RWPE1 (cell line): ENCODE measurements at regions of chr22 and their contacts with region 1.

Region 1: DNA sequence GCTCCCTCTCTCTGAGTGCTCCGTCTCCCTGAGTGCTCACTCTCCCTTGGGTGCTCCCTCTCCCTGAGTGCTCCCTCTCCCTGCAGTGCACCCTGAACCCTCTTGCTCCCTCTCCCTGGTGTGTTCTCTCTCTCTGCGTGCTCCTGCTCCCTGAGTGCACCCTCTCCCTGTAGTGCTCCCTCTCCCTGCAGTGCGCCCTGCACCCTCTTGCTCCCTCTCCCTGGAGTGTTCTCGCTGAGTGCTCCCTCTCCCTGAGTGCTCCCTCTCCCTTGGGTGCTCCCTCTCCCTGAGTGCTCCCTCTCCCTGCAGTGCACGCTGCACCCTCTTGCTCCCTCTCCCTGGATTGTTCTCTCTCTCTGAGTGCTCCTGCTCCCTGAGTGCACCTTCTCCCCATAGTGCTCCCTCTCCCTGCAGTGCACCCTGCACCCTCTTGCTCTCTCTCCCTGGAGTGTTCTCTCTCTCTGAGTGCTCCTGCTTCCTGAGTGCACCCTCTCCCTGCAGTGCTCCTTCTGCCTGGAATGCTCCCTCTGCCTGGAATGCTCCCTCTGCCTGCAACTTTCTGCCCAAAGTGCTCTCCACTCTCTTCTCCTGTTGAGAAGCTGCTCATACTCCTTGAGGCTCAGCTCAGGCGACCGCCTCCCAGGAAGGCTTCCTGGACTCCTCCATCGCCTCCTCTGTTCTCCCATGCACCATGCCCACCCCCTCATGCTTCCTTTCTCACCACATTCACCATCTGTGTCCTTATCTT is 48.4 kb upstream of the WNT7B start:
- DNase-seq: no peak
- H3K27ac ChIP-seq: 0 out of 2 replicates have a peak overlapping the region, but pooled peaks have one; percentile 5
- CTCF ChIP-seq: no peak

Region 2: DNA sequence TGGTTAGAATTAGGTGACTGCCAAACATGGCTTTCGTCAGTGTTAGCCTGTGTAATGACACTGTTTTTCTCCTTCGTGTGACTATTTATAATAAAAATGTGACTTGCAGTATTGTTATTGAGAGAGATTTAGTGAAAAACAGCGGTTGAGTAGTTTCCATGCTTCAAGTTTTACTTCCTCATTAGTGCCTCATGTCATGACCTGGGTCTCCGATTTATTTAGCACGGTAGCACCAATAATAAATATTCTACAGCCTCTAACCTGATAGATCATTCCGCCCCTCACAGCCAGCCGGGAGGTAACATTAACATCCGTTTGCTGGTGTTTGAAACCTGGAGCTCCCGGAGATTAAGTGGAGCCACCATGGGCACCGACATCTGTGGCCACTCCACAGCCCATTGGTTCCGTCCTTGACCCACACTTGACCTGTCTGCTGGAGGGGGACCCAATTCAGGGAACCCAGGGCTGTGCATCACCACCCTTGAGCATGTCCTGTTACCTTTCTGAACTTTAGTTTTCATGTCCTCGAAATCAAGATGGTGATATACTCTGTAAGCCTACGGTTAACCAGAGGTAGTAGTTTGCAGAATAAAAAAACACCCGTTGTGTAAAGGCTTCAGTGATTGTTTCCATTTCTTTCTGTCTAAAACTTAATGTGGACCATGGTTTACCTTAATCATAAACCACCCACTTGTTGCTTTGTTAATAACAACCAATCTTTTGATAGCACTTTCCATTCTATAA is 249.7 kb before region 1 on chr22:
- CTCF ChIA-PET with region 1: no interaction called
- POLR2A ChIA-PET with region 1: no interaction called
- DNase-seq: no peak
- H3K27ac ChIP-seq: no peak overlapping the region
- CTCF ChIP-seq: no peak

Region 3: DNA sequence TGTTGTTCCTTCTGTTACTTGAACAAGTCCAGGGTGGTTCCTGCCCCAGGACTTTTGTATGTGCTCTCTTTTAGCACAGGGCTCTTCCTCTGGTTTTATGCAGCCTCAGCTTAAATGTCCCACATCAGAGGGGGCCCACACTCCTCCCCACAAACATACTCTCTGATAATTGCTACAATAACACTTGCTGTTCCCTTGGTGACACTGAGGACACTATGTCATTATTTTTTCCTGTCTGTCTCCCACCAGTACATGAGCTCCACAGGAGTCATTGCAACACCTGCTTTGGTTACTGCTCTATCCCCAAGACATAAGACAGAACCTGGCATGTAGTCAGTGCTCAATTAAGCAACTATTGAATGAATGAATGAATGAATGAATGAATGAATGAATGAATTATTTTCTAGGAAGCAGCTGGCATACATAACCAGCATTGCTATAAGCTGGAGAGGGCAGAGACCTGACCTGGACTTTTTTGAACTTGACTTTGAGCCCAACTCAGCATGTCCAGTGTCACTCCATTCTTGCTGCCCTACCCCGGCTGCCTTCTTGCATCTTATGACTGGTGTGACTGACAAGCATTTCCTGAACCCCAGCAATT is 41.0 kb before region 1 on chr22:
- CTCF ChIA-PET with region 1: no interaction called
- POLR2A ChIA-PET with region 1: no interaction called
- DNase-seq: no peak
- H3K27ac ChIP-seq: no peak overlapping the region
- CTCF ChIP-seq: no peak

Region 4: GRCh38 chr22:46542011-46542985 is 516.9 kb after region 1 on chr22:
- CTCF ChIA-PET with region 1: no interaction called
- POLR2A ChIA-PET with region 1: interaction called, 10 read pairs
- DNase-seq: peak; percentile 64
- H3K27ac ChIP-seq: peak overlapping the region; percentile 95
- CTCF ChIP-seq: peak; percentile 96